Posterior cingulate gyrus (tissue), 11 donors: ENCODE measurements at regions of chr17 and their contacts with region 1.

Region 1: GRCh38 chr17:43428524-43428923 is 29.7 kb downstream of the ARL4D start:
- DNase-seq: peak in 1 of 10 donors; percentile 11

Region 2: DNA sequence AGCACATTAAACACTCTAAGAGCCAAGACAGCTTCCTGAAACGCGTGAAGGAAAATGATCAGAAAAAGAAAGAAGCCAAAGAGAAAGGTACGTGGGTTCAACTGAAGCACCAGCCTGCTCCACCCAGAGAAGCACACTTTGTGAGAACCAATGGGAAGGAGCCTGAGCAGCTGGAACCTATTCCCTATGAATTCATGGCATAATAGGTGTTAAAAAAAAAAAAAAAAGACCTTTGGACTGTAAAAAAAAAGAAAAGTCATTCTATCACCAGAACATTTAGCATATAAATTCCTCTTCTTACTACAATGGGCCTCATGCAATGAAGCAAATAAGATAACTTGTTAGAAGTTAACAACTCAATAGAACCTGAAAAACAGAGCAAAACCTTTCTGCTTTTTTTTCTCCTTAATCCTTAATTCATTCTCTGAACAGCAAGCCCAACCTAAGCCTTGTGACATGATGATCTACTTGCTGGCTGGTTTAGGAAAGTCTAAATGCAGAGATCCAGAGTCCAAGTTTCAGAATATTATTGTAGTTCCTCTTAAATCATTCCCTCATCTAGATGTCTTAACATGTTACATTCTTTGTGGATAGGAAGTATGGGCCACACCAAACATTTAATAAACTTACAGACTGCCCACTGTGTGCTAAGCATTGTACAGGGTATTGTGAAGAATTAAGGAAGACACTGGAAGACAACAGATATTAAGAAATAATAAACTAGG is 348.8 kb before region 1 on chr17:
- intact Hi-C with region 1: no loop called
- DNase-seq: no peak

Region 3: GRCh38 chr17:43324205-43324893 is 104.2 kb before region 1 on chr17:
- intact Hi-C with region 1: no loop called
- DNase-seq: peak in 1 of 10 donors; percentile 78

Region 4: DNA sequence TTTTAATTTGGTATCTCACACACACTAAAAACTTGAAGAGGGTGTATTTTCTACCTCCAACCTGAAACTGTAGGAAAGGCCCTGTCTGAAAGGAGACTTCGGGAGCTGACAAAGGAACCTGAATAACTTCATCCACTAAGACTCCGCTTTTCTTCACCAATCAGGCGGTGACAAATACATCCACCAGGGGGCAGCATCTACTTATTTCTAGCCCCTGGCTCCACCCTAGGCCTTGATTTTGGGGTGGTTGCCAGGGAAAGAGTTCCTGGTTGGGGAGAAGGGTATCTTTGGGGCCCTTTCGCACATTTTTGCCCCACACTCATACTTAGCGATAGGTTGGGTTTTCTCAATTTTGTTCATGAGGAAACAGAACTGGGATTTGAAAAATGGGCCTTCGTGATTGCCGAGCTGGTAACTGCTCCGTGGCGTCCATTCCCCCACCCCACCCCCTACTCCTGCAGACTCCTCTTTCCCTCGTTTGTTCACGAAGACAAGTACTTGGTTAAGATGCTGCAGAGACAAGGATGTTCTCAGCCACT is 34.5 kb before region 1 on chr17:
- intact Hi-C with region 1: loop called (anchors 1 kb)
- DNase-seq: peak; percentile 74 to 97 (median 94)

Region 5: GRCh38 chr17:43490621-43491020 is 62.1 kb after region 1 on chr17:
- intact Hi-C with region 1: no loop called
- DNase-seq: no peak